CD8-positive, alpha-beta memory T cell (primary cell): ENCODE measurements at regions of chr9 and their contacts with region 1.

Region 1: DNA sequence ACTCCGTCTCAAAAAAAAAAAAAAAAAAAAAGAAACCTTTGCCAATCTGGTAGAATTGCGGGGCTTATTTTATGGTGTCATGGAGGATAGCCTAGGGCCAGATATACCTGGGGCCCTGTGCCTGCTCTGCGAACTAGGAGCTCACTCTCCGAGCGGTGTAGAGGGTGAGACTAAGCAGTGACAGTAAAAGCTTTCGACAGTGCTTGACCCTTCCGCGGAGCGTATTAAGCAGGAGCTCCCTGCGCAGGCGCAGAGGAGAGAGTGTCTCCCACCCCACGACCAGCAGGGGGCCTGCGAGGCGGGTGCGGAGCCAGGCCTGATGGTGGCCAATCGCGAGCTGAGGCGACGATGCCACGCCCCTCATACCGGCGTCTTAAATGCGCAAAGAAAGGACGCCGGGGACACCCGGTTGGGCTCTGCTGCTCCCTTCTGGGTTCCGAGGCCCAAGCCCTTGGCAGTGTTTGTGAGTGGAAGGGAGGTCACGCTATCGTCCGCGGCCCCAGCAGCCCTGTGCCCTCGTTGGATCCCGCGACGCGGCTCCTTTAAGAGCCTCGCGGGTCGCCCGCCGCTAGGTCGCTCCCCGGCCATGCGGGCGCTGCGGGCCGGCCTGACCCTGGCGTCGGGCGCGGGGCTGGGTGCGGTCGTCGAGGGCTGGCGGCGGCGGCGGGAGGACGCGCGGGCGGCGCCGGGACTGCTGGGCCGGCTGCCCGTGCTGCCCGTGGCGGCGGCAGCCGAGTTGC is at the start of gene ENDOG:
- DNase-seq: peak; percentile 95 to 98 (median 97)
- H3K4me3 ChIP-seq: peak within 1 kb of the TSS; percentile 89
- H3K4me3 Mint-ChIP-seq: peak within 1 kb of the TSS; percentile 89 to 96 (median 91)
- H3K27ac ChIP-seq: peak within 1 kb of the TSS; percentile 47
- H3K27ac Mint-ChIP-seq: peak within 1 kb of the TSS; percentile 80 to 96 (median 93)
- H3K4me1 ChIP-seq: peaks cover 7% of the 10 kb centered on the region
- H3K4me1 Mint-ChIP-seq: peaks cover 9 to 26% (median 19%) of the 10 kb centered on the region in 3 donors
- H3K27me3 ChIP-seq: no peaks in the 10 kb centered on the region
- H3K27me3 Mint-ChIP-seq: peaks cover 0 to 3% of the 10 kb centered on the region in 2 donors
- total RNA-seq, gene ENDOG: 22.3 to 23.3 TPM

Region 2: GRCh38 chr9:128786681-128787601 is 31.3 kb before region 1 on chr9 and contains the start of gene TBC1D13:
- CTCF ChIA-PET with region 1: interaction called, 12 read pairs
- POLR2A ChIA-PET with region 1: interaction called, 4 read pairs
- DNase-seq: peak; percentile 88 to 95 (median 91)
- H3K4me3 ChIP-seq: peak within 1 kb of the TSS; percentile 51
- H3K4me3 Mint-ChIP-seq: peak within 1 kb of the TSS; percentile 89 to 96 (median 92)
- H3K27ac ChIP-seq: peak within 1 kb of the TSS; percentile 65
- H3K27ac Mint-ChIP-seq: peak within 1 kb of the TSS; percentile 88 to 98 (median 94)
- H3K4me1 ChIP-seq: peaks cover 15% of the 10 kb centered on the region
- H3K4me1 Mint-ChIP-seq: peaks cover 15 to 44% (median 24%) of the 10 kb centered on the region in 3 donors
- H3K27me3 ChIP-seq: no peaks in the 10 kb centered on the region
- H3K27me3 Mint-ChIP-seq: no peaks in the 10 kb centered on the region
- total RNA-seq, gene TBC1D13: 23.0 to 24.6 TPM

Region 3: DNA sequence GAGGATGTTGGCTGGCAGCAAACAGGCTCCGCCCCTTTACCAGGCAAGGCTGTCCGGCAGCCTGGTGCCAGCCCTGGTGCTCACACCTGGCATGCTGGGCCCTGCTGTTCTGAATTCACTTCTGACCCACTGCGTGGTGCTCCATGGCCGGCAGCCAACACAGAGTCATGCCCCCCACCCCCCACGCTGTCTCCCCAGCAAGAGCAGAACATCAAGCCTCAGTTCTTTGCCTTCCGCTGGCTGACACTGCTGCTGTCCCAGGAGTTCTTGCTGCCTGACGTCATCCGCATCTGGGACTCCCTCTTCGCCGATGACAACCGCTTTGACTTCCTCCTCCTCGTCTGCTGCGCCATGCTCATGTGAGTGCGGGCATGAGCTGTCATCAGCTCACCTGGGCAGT is 12.6 kb before region 1 on chr9:
- CTCF ChIA-PET with region 1: interaction called, 11 read pairs
- POLR2A ChIA-PET with region 1: interaction called, 3 read pairs
- DNase-seq: no peak
- H3K4me3 ChIP-seq: no peak overlapping the region
- H3K4me3 Mint-ChIP-seq: no peak overlapping the region
- H3K27ac ChIP-seq: no peak overlapping the region
- H3K27ac Mint-ChIP-seq: no peak overlapping the region
- H3K4me1 ChIP-seq: no peaks in the 10 kb centered on the region
- H3K4me1 Mint-ChIP-seq: no peaks in the 10 kb centered on the region
- H3K27me3 ChIP-seq: no peaks in the 10 kb centered on the region
- H3K27me3 Mint-ChIP-seq: no peaks in the 10 kb centered on the region

Region 4: DNA sequence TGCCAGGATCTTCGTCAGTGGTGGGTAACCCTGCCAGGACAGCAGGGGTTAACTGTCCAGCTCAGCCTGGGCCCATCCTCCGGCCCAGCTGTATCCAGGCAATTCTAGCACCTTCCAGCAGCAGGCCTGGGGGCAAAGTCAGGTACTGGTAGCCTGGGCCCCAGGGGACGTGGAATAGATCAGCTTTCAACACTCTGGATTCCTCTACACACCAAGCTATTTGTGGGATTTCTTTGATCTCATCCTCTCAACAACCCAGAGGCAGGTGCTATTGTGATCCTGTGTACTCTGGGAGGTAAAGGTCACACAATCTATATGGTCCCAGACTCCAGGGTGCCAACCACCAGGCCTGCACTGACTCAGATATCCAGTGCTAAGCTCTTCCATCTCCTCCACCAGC is 20.1 kb after region 1 on chr9:
- CTCF ChIA-PET with region 1: interaction called, 10 read pairs
- POLR2A ChIA-PET with region 1: no interaction called
- DNase-seq: no peak
- H3K4me3 ChIP-seq: no peak overlapping the region
- H3K4me3 Mint-ChIP-seq: no peak overlapping the region
- H3K27ac ChIP-seq: no peak overlapping the region
- H3K27ac Mint-ChIP-seq: peak overlapping the region in 1 of 8 donors; percentile 20
- H3K4me1 ChIP-seq: no peaks in the 10 kb centered on the region
- H3K4me1 Mint-ChIP-seq: no peaks in the 10 kb centered on the region
- H3K27me3 ChIP-seq: no peaks in the 10 kb centered on the region
- H3K27me3 Mint-ChIP-seq: no peaks in the 10 kb centered on the region